T-cell (primary cell): ENCODE measurements at regions of chr10 and their contacts with region 1.

Region 1: DNA sequence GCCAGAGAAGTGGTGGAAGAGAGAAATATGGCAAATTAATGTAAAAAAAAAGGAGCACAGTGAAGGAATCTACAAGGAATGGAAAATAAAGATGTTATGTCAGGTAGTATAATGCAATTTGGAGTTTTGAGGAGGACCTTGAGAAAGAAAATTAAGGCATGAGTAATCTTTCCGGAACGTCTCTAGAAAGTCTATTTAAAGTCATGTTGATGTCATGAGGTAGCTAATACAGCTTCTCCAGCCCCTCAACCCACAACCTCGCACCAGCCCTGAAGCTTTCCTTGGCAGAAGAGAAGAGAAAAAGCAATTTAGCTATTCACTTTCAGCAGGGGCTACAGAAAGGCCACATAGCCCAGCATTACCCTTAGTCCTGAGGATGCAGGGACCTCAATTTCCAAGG is 22.5 kb downstream of the TRDMT1 start:
- DNase-seq: no peak
- ATAC-seq: no peak
- H3K4me3 ChIP-seq: no peak overlapping the region
- H3K4me3 Mint-ChIP-seq: no peak overlapping the region
- H3K27ac ChIP-seq: no peak overlapping the region
- H3K27ac Mint-ChIP-seq: no peak overlapping the region
- H3K4me1 ChIP-seq: peaks cover 0 to 3% of the 10 kb centered on the region in 2 experiments
- H3K4me1 Mint-ChIP-seq: peaks cover 8 to 18% (median 17%) of the 10 kb centered on the region in 3 donors
- H3K27me3 ChIP-seq: no peaks in the 10 kb centered on the region
- H3K27me3 Mint-ChIP-seq: no peaks in the 10 kb centered on the region

Region 2: DNA sequence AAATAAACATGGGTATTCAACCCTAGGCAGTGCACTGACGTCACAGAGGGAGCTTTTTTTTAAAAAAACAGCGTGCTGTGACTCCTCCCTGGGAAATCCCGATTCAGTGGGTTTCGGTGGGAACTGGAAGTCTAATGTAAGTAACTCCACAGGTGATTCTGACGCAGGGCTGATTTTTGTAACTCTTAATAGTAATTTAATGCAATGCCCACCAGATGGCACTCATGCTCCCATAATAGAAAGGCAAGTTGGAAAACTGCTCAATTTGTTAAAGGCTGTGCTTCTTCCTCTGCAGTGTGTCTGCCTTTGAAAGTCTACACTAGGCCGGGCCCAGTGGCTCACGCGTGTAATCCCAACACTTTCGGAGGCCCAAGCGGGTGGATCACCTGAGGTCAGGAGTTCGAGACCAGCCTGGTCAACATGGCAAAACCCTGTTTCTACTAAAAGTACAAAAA is 350.9 kb before region 1 on chr10:
- CTCF ChIA-PET with region 1: no interaction called
- POLR2A ChIA-PET with region 1: no interaction called
- DNase-seq: peak; percentile 6 to 88 (median 51)
- ATAC-seq: peak; percentile 81 to 92 (median 92)
- H3K4me3 ChIP-seq: no peak overlapping the region
- H3K4me3 Mint-ChIP-seq: no peak overlapping the region
- H3K27ac ChIP-seq: no peak overlapping the region
- H3K27ac Mint-ChIP-seq: peak overlapping the region; percentile 66 to 77
- H3K4me1 ChIP-seq: peaks cover 0 to 6% of the 10 kb centered on the region in 2 experiments
- H3K4me1 Mint-ChIP-seq: peaks cover 0 to 7% (median 4%) of the 10 kb centered on the region in 3 donors
- H3K27me3 ChIP-seq: no peaks in the 10 kb centered on the region
- H3K27me3 Mint-ChIP-seq: no peaks in the 10 kb centered on the region

Region 3: DNA sequence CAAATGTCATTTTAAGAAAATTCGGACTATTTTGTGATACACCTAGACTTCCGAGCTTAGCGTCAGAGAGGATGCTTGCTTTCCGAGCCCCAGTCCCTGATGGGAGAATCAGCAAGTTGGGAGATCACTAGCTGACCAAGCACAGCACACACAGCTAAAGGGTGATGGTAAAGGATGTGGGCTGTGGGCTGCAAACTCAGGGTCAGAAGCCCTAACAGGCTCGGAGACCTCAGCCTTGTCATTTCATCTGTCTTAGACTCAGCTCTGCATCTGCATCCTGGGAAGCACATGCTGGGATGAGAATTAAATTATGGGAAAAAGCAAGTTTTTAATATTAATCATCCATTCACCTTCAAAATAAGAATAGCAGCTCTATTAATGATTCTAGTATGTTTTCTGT is 52.7 kb before region 1 on chr10:
- CTCF ChIA-PET with region 1: interaction called in 1 of 2 experiments, 6 read pairs
- POLR2A ChIA-PET with region 1: interaction called in 1 of 2 experiments, 14 read pairs
- DNase-seq: no peak
- ATAC-seq: no peak
- H3K4me3 ChIP-seq: no peak overlapping the region
- H3K4me3 Mint-ChIP-seq: no peak overlapping the region
- H3K27ac ChIP-seq: no peak overlapping the region
- H3K27ac Mint-ChIP-seq: no peak overlapping the region
- H3K4me1 ChIP-seq: no peaks in the 10 kb centered on the region
- H3K4me1 Mint-ChIP-seq: peaks cover 0 to 5% (median 0%) of the 10 kb centered on the region in 3 donors
- H3K27me3 ChIP-seq: no peaks in the 10 kb centered on the region
- H3K27me3 Mint-ChIP-seq: no peaks in the 10 kb centered on the region